ENCODE measurements at regions of chr11 and their contacts with region 1.

Region 1: DNA sequence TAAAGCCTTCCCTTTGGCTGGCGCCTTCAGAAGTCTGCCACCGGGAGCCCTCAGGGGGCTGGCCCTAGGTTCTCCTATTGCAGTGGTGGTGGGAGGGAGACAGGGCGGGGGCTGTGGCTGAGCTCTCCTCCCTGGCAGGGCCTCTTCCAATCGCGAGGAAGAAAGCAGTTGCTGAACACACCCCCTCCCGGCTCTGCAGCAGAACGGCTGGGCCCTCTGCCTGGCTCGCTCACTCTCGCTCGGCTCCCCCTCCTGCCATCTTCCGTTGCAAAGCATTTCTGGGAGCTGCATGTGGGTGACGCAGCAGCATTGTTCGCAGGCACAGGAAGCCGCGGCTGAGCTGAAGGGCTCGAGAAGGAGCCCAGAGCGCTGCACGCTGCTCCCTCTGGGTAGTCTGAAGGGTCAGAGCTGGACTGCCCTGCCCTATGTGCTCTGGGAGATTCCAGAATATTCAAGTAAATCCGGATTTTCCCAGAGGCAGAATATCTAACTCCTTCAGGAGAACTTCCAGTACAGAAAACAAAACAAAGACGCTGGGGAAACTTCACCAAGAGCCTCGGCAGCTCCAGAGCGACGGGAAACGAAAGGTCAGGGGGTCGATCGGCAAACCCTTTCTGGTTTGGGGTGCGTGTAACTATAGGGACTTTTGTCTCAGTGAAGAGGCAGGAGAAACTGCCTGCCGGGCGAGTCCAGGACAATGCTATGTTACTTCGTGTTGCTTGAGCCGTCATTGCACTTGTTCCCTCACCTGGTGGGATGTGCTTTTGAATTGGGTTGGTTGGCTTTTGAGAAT is 26.3 kb upstream of the GRK2 start:
- DNase-seq: peak; percentile 95 to 100 (median 98)
- H3K4me3 ChIP-seq: peak overlapping the region; percentile 52 to 87
- H3K4me3 Mint-ChIP-seq: peak overlapping the region; percentile 96 to 100 (median 99)
- H3K27ac ChIP-seq: peak overlapping the region; percentile 97
- H3K27ac Mint-ChIP-seq: peak overlapping the region; percentile 96 to 100 (median 100)
- H3K4me1 ChIP-seq: peaks cover 39% of the 10 kb centered on the region
- H3K4me1 Mint-ChIP-seq: peaks cover 39 to 62% (median 48%) of the 10 kb centered on the region in 4 donors
- H3K27me3 ChIP-seq: no peaks in the 10 kb centered on the region
- H3K27me3 Mint-ChIP-seq: no peaks in the 10 kb centered on the region

Region 2: GRCh38 chr11:67118801-67119584 is 121.0 kb before region 1 on chr11 and contains the start of gene KDM2A:
- CTCF ChIA-PET with region 1: interaction called, 6 read pairs
- POLR2A ChIA-PET with region 1: interaction called, 22 read pairs
- intact Hi-C with region 1: loop called (anchors 1 kb)
- DNase-seq: peak; percentile 96 to 100 (median 98)
- H3K4me3 ChIP-seq: peak within 1 kb of the TSS; percentile 60 to 97
- H3K4me3 Mint-ChIP-seq: peak within 1 kb of the TSS; percentile 94 to 99 (median 97)
- H3K27ac ChIP-seq: peak within 1 kb of the TSS; percentile 76
- H3K27ac Mint-ChIP-seq: peak within 1 kb of the TSS; percentile 89 to 98 (median 96)
- H3K4me1 ChIP-seq: peaks cover 31% of the 10 kb centered on the region
- H3K4me1 Mint-ChIP-seq: peaks cover 13 to 40% (median 27%) of the 10 kb centered on the region in 4 donors
- H3K27me3 ChIP-seq: no peaks in the 10 kb centered on the region
- H3K27me3 Mint-ChIP-seq: no peaks in the 10 kb centered on the region
- total RNA-seq, gene KDM2A: 193 to 200 TPM

Region 3: DNA sequence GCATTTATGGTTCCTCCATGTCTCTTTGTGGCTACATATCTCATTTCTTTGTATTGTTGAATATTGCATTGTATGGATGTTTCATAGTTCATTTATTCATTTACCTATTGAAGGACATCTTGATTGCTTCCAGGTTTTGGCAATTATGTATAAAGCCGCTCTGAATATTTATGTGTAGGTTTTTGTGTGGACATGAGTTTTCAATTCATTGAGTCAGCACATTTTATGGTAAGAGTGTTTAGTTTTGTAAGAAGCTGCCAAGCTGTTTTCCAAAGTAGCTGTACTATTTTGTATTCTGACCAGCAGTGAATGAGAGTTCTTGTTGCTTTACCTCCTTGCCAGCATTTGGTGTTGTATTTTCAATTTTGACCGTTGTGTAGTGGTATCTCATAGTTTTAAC is 81.8 kb before region 1 on chr11:
- CTCF ChIA-PET with region 1: no interaction called
- POLR2A ChIA-PET with region 1: no interaction called
- intact Hi-C with region 1: no loop called
- DNase-seq: no peak
- H3K4me3 ChIP-seq: no peak overlapping the region
- H3K4me3 Mint-ChIP-seq: no peak overlapping the region
- H3K27ac ChIP-seq: no peak overlapping the region
- H3K27ac Mint-ChIP-seq: peak overlapping the region in 4 of 7 donors; percentile 6 to 40 (median 18)
- H3K4me1 ChIP-seq: peaks cover 23% of the 10 kb centered on the region
- H3K4me1 Mint-ChIP-seq: peaks cover 26 to 53% (median 39%) of the 10 kb centered on the region in 4 donors
- H3K27me3 ChIP-seq: no peaks in the 10 kb centered on the region
- H3K27me3 Mint-ChIP-seq: no peaks in the 10 kb centered on the region

Region 4: DNA sequence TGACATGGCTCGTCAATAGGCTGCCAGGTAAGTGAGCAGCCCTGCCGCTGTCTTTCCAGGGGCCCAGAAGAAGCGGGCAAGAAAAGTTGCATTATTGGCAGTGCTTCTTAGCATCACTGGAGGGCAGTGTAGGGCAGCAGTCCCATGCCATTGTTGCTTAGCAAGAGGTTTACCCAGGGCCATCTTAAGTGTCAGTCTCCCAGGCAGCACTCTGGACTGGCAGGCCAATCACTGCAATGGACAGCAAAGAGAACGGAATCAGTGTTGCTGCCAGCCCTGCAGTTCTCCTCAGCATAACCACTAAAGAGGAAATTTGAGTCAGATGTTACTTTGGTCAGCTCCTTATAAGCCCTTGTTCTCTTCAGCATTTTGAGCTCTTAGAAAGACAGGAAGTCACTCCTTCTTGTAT is 12.9 kb after region 1 on chr11:
- CTCF ChIA-PET with region 1: interaction called, 16 read pairs
- POLR2A ChIA-PET with region 1: interaction called, 64 read pairs
- intact Hi-C with region 1: no loop called
- DNase-seq: peak; percentile 26 to 46 (median 40)
- H3K4me3 ChIP-seq: no peak overlapping the region
- H3K4me3 Mint-ChIP-seq: peak overlapping the region in 3 of 8 donors; percentile 6 to 59 (median 39)
- H3K27ac ChIP-seq: no peak overlapping the region
- H3K27ac Mint-ChIP-seq: peak overlapping the region in 6 of 7 donors; percentile 7 to 78 (median 32)
- H3K4me1 ChIP-seq: peaks cover 15% of the 10 kb centered on the region
- H3K4me1 Mint-ChIP-seq: peaks cover 10 to 52% (median 32%) of the 10 kb centered on the region in 4 donors
- H3K27me3 ChIP-seq: no peaks in the 10 kb centered on the region
- H3K27me3 Mint-ChIP-seq: no peaks in the 10 kb centered on the region

Region 5: DNA sequence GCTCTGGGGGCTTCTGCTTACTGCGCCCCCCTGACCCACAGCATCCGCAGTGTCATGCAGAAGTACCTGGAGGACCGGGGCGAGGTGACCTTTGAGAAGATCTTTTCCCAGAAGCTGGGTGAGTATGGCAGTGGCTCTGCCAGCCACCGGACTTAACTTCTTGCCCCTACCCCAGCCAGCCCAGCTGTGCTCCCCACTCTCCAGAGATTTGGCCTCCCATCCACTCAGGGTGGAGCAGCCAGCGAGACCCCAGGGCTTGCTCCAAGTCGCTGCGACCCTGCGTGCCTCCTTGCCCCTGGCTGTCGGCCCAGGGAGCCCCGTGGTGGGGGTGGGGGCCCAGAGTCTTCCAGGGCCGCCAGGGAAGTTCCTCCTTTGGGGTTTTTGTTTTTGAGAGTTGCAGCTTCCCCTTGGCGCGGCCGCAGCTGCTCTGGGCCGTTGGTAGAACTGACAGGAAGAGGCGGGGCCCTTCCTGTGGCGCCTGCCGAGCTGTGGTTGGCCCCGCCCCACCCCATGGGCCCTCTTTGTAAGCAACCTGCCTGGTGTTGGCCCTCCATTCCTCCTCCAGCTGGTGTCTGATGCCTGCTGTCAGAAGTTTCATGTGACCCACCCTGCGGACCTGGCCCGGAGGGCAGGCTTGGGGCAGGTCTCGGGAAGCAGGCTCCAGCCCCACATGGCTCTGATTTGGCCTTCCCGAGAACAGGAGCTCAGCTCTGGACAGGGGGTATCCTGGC is 37.4 kb after region 1 on chr11:
- CTCF ChIA-PET with region 1: no interaction called
- POLR2A ChIA-PET with region 1: interaction called, 72 read pairs
- intact Hi-C with region 1: loop called (anchors 1 kb)
- DNase-seq: peak; percentile 92 to 96 (median 93)
- H3K4me3 ChIP-seq: peak overlapping the region; percentile 63 to 71
- H3K4me3 Mint-ChIP-seq: peak overlapping the region; percentile 79 to 92 (median 83)
- H3K27ac ChIP-seq: peak overlapping the region; percentile 95
- H3K27ac Mint-ChIP-seq: peak overlapping the region; percentile 94 to 99 (median 97)
- H3K4me1 ChIP-seq: peaks cover 98% of the 10 kb centered on the region
- H3K4me1 Mint-ChIP-seq: peaks cover 25 to 90% (median 54%) of the 10 kb centered on the region in 4 donors
- H3K27me3 ChIP-seq: no peaks in the 10 kb centered on the region
- H3K27me3 Mint-ChIP-seq: no peaks in the 10 kb centered on the region

Region 6: GRCh38 chr11:67288452-67289225 is 48.7 kb after region 1 on chr11:
- CTCF ChIA-PET with region 1: interaction called, 3 read pairs
- POLR2A ChIA-PET with region 1: interaction called, 45 read pairs
- intact Hi-C with region 1: loop called (anchors 1 kb)
- DNase-seq: peak; percentile 89 to 94 (median 91)
- H3K4me3 ChIP-seq: peak overlapping the region; percentile 58 to 62
- H3K4me3 Mint-ChIP-seq: peak overlapping the region; percentile 79 to 90 (median 86)
- H3K27ac ChIP-seq: peak overlapping the region; percentile 88
- H3K27ac Mint-ChIP-seq: peak overlapping the region; percentile 95 to 100 (median 98)
- H3K4me1 ChIP-seq: peaks cover 77% of the 10 kb centered on the region
- H3K4me1 Mint-ChIP-seq: peaks cover 32 to 81% (median 46%) of the 10 kb centered on the region in 4 donors
- H3K27me3 ChIP-seq: no peaks in the 10 kb centered on the region
- H3K27me3 Mint-ChIP-seq: no peaks in the 10 kb centered on the region

Region 7: GRCh38 chr11:67303132-67303834 is 63.3 kb after region 1 on chr11 and contains the start of gene SSH3:
- CTCF ChIA-PET with region 1: no interaction called
- POLR2A ChIA-PET with region 1: interaction called, 23 read pairs
- intact Hi-C with region 1: no loop called
- DNase-seq: peak in 3 of 5 donors; percentile 19 to 42 (median 28)
- H3K4me3 ChIP-seq: peak within 1 kb of the TSS in 1 of 2 donors; percentile 66
- H3K4me3 Mint-ChIP-seq: peak within 1 kb of the TSS; percentile 48 to 80 (median 70)
- H3K27ac ChIP-seq: peak within 1 kb of the TSS; percentile 68
- H3K27ac Mint-ChIP-seq: peak within 1 kb of the TSS in 6 of 7 donors; percentile 47 to 72 (median 64)
- H3K4me1 ChIP-seq: peaks cover 20% of the 10 kb centered on the region
- H3K4me1 Mint-ChIP-seq: peaks cover 7 to 31% (median 14%) of the 10 kb centered on the region in 4 donors
- H3K27me3 ChIP-seq: no peaks in the 10 kb centered on the region
- H3K27me3 Mint-ChIP-seq: no peaks in the 10 kb centered on the region
- total RNA-seq, gene SSH3: 22.5 to 26.3 TPM

Region 8: GRCh38 chr11:67391304-67392132 is 151.5 kb after region 1 on chr11 and contains the start of gene RAD9A:
- CTCF ChIA-PET with region 1: no interaction called
- POLR2A ChIA-PET with region 1: interaction called, 11 read pairs
- intact Hi-C with region 1: no loop called
- DNase-seq: peak; percentile 86 to 93 (median 89)
- H3K4me3 ChIP-seq: peak within 1 kb of the TSS; percentile 63 to 75
- H3K4me3 Mint-ChIP-seq: peak within 1 kb of the TSS; percentile 87 to 93 (median 91)
- H3K27ac ChIP-seq: peak within 1 kb of the TSS; percentile 79
- H3K27ac Mint-ChIP-seq: peak within 1 kb of the TSS; percentile 82 to 94 (median 87)
- H3K4me1 ChIP-seq: peaks cover 17% of the 10 kb centered on the region
- H3K4me1 Mint-ChIP-seq: peaks cover 23 to 46% (median 36%) of the 10 kb centered on the region in 4 donors
- H3K27me3 ChIP-seq: no peaks in the 10 kb centered on the region
- H3K27me3 Mint-ChIP-seq: no peaks in the 10 kb centered on the region
- total RNA-seq, gene RAD9A: 51.8 to 55.9 TPM

Measured in CD4-positive, alpha-beta memory T cell (primary cell).